Mucosa of descending colon (tissue), 3 donors: ENCODE measurements at regions of chr4 and their contacts with region 1.

Region 1: GRCh38 chr4:169024762-169025161 is 14.7 kb upstream of the CBR4 start:
- DNase-seq: peak in 1 of 3 donors; percentile 55
- ATAC-seq: peak; percentile 75
- H3K4me3 ChIP-seq: no peak overlapping the region
- H3K4me1 ChIP-seq: no peaks in the 10 kb centered on the region
- CTCF ChIP-seq: no peak

Region 2: DNA sequence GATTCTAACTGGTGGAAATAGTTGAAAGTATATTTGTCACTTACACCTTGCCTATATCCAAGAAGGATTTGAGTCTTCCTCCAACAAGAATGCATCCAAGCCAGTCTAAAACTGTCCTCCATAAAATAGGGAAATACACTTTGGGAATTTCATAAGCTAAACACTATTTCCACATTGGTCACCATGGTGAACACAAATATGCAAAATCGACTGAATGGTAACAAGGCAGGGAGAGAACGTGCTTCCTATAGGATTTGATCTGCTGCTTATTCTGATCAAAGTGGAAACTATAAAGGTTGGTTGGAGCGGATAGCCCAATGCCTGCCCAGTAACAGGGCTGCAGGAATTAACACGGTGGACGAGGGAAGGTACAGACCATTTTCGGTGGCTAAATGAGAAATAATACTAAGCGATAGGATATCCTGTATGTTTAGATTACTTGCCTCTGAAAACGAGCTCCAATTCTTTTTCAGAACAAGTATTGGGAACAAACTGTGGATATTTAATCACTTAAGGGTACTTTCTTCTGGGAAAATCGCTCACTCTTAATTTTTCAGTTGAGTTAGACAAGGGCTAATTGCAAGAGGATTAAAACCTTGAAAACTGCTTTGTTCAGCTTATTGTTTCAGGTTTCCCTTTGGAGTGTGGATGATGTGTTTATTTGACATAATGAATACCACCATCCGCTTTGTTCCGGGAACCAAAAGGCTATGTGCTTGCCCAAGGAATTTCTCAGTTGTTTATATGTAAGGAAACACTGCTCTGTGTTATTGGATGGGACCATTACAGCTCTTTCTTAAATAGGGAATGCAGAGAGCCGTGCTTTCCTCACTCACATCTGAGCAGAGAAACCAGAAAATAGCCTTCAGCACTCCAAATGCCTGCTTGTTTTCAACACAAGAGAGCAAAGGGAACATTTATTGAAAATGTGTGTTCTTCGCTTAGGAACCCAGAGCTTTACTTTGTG is 209.1 kb before region 1 on chr4:
- intact Hi-C with region 1: no loop called
- DNase-seq: no peak
- ATAC-seq: no peak
- H3K4me3 ChIP-seq: no peak overlapping the region
- H3K4me1 ChIP-seq: peaks cover 6% of the 10 kb centered on the region
- CTCF ChIP-seq: no peak

Region 3: DNA sequence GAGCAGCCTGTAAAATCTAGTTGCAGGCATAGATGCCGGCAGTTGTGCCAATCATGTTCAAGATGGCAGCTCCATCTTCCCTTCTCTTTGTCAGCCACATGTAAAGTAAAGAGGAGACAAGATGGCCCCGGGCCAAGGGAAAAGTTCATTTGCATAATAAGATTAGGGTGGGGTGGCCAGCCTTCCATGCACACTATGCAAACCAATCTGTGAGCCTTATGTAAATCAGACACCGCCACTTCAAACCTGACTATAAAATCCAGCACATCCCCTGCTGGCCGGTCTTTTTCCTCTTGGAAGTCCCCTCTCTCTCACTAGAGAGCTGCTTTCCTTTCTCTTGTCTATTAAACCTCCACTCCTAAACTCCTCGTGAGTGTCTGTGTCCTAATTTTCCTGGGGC is 64.2 kb after region 1 on chr4:
- intact Hi-C with region 1: no loop called
- DNase-seq: no peak
- ATAC-seq: no peak
- H3K4me3 ChIP-seq: no peak overlapping the region
- H3K4me1 ChIP-seq: no peaks in the 10 kb centered on the region
- CTCF ChIP-seq: no peak

Region 4: GRCh38 chr4:169485791-169486742 is 461.3 kb after region 1 on chr4:
- intact Hi-C with region 1: loop called in 1 of 2 experiments (anchors 10 kb)
- DNase-seq: peak in 1 of 3 donors; percentile 71
- ATAC-seq: peak; percentile 61
- H3K4me3 ChIP-seq: no peak overlapping the region
- H3K4me1 ChIP-seq: no peaks in the 10 kb centered on the region
- CTCF ChIP-seq: no peak